Gastrocnemius medialis (tissue), 4 donors: ENCODE measurements at regions of chr3 and their contacts with region 1.

Region 1: DNA sequence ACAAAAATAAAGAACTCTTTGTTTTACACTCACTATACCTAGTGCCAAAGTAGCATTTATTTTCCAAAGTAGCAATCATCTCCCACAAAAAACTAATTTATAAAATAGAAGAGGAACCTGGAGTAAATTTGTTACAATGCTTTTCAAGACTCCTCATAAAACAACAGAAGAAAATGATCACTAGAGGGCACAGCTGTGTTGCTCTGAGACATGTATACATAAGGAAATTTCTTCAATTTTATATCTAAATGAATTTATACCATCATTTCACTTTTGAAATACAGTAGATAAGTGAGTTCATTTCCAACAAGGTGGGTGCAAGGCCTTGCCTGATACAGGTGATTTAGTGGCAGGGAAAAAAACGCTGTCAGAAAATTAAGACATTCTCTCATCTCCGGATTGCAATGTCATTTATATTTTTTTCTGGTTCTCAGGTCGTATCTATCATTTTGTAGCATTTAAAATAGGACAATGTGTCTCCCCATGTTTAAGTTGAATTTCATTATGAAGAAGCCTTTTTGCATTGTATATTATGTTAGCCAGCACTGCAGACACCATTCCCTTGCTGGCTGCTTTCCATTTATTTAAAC is 25.3 kb upstream of the ARHGEF26 start:
- DNase-seq: no peak
- ATAC-seq: no peak
- H3K4me3 ChIP-seq: no peak overlapping the region
- H3K27ac ChIP-seq: no peak overlapping the region
- H3K4me1 ChIP-seq: no peaks in the 10 kb centered on the region
- H3K27me3 ChIP-seq: no peaks in the 10 kb centered on the region
- CTCF ChIP-seq: no peak
- POLR2A ChIP-seq: no peak

Region 2: DNA sequence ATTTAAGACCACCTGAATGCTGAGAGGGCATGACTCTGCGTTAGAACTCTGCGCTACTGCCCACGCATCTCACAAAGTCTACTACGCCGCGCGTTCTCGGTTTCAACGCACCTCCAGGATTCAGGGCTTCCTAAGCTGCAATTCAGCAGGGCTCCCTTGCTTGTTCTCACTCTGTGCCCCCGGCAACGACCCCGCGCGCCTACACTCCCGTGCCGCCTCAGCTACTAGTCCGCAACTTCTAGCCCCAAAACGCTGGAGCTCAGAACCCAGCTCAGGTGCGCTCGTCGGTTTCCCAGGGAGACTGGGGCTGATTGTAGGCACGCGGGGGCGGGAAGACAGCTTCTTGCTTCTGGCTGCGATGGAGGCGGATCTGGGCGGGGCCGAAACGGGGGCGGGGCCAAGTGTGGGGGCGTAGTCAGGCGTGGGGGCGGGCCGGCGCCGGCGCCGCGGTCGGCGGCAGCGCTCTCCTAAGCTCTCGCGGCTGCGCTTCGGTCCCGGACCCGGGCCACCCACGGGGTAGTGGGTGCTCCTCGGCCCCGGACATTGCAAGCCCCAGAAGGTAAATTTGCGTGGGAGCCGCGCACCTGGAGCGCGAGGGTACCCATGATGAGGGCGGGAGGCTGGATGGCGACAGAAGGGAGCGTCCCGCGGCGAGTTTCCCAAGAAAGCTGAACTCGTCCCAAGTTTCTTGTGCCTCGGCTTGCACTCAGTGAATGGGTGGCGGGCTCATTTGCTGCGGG is 25.2 kb after region 1 on chr3 and contains the start of gene ARHGEF26:
- in situ Hi-C with region 1: no loop called
- intact Hi-C with region 1: loop called (anchors 1 kb)
- DNase-seq: peak; percentile 48 to 53
- ATAC-seq: peak; percentile 72 to 79
- H3K4me3 ChIP-seq: peak within 1 kb of the TSS; percentile 68 to 81 (median 72)
- H3K27ac ChIP-seq: peak within 1 kb of the TSS; percentile 21 to 57 (median 47)
- H3K4me1 ChIP-seq: no peaks in the 10 kb centered on the region
- H3K27me3 ChIP-seq: peaks cover 20 to 36% (median 29%) of the 10 kb centered on the region in 3 donors
- CTCF ChIP-seq: no peak
- POLR2A ChIP-seq: peak; percentile 15 to 57
- total RNA-seq, gene ARHGEF26: 0.41 to 1.7 (median 1.2) TPM

Region 3: DNA sequence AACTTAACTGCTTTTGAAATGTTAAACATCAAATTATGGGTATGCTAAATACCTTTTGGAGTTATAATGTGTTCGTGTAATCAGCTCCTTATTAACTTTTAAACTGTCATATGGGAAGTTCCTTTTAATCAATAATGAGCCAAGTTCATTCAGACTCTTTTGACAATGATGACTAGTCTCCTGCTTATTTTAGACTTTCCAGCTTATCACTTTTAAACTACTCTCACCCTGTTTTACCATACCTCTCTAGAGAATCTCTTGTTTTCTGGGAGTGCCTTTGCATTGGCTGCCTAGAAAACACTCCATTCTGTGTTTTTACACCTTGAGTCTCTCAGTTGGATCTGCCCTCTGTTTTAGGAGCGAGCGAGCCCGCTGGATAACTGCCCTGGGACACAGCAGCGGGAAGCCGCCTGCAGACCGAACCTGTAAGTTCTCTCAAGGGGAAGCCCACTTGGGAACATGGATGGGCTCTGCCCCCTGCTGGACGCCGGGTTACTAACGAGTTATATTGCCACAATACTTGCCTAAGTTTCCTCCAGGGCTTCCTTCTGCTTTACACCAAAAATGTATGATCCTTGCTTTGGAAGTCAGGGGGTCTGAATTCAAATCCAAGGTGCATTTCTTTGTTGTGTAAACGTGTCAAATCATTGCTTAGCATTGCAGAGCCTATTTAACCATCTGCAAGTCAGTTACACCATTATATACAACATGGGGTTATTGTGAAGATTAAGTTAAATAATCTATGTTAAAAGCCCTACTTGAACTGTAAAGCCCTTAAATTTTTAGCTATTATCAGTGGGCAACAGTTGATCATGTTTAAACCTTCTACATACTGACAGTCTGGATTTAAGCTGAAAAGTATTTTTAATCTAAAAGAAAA is 157.1 kb after region 1 on chr3:
- in situ Hi-C with region 1: loop called in 1 of 4 experiments (anchors 10 kb)
- intact Hi-C with region 1: loop called (anchors 10 kb)
- DNase-seq: peak; percentile 25 to 56
- ATAC-seq: peak in 1 of 2 donors; percentile 58
- H3K4me3 ChIP-seq: no peak overlapping the region
- H3K27ac ChIP-seq: no peak overlapping the region
- H3K4me1 ChIP-seq: no peaks in the 10 kb centered on the region
- H3K27me3 ChIP-seq: no peaks in the 10 kb centered on the region
- CTCF ChIP-seq: peak; percentile 40 to 76 (median 72)
- POLR2A ChIP-seq: no peak